ENCODE measurements at regions of chr10 and their contacts with region 1.

Region 1: GRCh38 chr10:13787015-13787421 is 200.3 kb downstream of the PRPF18 start:
- DNase-seq: no peak
- ATAC-seq: no peak

Region 2: GRCh38 chr10:13839430-13839990 is 52.5 kb after region 1 on chr10:
- intact Hi-C with region 1: loop called (anchors 5 kb)
- DNase-seq: peak; percentile 69
- ATAC-seq: peak; percentile 68

Region 3: GRCh38 chr10:13913897-13914296 is 126.9 kb after region 1 on chr10:
- intact Hi-C with region 1: no loop called
- DNase-seq: peak; percentile 66
- ATAC-seq: no peak

Region 4: GRCh38 chr10:13956826-13957225 is 169.8 kb after region 1 on chr10:
- intact Hi-C with region 1: loop called (anchors 5 kb)
- DNase-seq: peak; percentile 78
- ATAC-seq: peak; percentile 92

Region 5: DNA sequence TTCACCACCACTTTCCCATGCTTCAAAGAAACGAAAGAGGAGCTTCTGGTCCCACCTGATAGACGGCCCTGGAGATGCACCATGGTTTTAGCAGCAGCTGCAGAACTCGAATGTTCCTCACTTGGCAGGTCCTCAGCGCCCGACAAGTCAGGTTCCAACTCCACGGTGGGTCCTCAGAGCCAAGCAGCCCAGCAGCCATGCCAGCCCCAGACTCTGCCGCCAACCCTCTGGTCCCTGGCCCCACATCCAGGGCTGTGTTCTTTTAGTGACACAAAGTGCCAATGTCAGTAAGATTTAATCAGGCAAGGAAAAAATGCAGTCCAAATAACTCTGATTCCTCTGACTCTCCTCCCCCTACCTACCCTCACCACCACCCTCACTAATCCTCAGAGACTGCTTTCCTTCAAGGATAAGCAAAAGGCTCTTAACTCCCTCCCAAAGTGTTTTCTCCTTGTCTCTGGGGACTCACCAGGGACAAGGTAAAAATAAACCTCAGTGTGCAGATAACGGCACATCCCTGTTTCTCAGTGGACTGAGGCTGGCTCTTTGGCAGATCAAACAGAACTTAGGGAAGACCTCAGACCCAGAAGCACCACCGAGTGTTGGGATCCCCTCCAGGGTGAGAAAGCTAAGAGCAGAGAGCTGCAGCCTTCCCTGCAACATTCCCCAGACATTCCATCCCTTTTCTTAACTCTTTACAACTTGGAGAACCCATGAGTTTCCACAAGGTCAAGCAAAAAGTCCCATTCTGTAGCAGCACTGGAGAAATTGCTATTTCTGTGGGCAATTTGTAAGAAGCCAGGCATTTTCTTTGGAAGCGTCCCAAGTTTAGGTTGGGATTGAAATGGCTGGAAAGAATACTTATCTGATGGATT is 184.8 kb after region 1 on chr10:
- intact Hi-C with region 1: no loop called
- DNase-seq: no peak
- ATAC-seq: peak; percentile 44

Region 6: DNA sequence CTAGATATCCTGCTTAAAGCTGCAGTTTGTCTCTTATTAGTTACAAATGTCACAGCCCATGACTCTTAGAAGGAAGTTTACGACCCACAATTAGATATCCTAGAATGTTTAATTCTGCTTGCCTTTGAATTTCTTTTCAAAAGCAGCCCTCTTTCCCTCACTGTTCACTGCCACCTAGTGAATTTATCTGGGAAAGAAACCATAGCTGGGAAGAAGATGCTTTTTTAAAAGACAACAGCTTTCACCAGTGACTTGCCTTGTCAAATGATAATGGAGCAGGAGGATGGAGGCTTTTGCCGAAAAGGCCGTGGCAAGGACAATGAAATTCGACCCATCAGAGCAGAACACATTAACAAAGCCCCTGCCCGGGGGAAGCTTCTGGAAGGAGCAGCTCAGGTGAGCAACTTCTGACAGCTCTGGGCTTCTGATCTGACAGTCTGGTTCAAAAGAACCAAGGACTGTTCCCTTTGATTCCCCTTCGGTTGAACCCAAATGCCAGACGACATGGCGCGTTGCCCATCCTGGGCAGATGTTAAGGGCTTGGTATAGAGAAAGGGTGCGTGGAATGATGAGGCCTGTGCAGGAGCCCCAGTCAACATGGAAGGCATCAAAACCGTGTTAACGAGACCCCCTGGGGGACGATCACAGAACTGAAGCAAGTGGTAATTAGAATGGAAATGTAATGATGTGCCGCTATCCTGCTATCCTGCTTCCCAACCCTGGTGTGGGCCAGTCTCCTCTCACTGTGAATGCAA is 306.9 kb after region 1 on chr10:
- intact Hi-C with region 1: loop called (anchors 1 kb)
- DNase-seq: no peak
- ATAC-seq: peak; percentile 40

Region 7: GRCh38 chr10:14478604-14479003 is 691.6 kb after region 1 on chr10:
- intact Hi-C with region 1: loop called (anchors 2 kb)
- DNase-seq: peak; percentile 82
- ATAC-seq: peak; percentile 73